Left colon (tissue), 2 donors: ENCODE measurements at regions of chr19 and their contacts with region 1.

Region 1: DNA sequence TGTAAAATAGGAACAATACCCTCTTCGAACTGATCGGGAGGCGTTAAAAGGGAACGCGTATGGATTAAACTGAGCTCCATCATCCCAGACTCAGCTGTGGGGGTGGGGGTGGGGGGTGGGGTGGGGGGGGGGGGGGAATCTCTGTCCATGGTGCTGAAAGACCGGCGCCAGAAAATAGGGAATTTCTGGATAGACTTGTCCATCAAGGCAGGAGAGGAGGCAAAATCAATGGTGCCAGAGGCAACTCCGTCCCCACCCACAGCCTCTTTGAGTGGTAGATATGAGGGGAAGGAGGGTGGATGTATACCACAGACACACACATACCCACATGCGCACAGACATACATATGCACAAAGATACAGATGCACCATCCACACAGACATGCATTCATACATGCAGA is 37.4 kb downstream of the ZNF787 start:
- DNase-seq: no peak
- ATAC-seq: no peak

Region 2: GRCh38 chr19:56170261-56170660 is 86.6 kb after region 1 on chr19:
- intact Hi-C with region 1: loop called (anchors 2 to 10 kb)
- DNase-seq: no peak
- ATAC-seq: no peak